ENCODE measurements at regions of chr7 and their contacts with region 1.

Region 1: DNA sequence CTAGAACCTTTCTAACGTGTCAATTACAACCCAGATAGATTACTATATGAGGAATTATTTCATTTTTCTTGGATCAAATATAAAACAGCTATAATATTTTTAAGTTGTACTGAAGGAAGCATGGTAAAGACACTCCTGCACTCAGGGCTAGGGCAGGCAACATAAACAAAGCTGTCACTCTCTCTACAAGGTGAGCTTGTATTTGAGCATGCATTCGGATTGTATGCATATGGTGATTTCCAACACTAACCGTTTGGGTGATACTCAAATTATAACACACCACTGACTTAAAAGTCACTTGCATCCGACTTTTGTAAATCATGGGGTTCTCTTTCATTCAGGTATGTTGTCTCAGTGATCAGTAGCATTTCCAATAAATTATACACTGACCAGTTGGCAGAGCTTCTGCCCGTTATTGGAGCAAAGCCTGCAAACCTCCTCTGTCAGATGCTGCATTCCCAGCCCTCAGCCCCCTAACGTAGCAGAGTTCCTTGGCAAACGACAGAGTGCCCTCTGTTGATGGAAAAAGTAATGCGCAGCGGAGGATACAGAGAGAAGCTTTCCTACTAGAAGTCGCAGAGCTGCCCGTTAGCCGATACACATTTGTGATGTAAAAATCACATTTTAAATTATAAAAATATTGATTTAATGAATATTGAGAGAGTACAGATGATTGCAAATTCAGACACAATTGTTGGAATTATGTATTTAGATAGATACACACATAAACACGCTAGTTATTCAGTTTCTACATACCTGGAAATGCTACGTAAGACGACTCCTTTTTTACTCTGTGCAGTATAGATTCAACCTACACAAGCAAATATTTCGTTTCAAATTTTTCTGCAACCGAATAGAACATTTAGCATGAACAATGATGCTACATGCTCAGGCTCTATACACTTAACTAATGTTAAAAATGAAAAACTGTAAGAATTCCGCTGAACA is 173.9 kb upstream of the SP4 start:
- DNase-seq: no peak
- H3K4me3 ChIP-seq: no peak overlapping the region
- H3K27ac ChIP-seq: no peak overlapping the region
- H3K4me1 ChIP-seq: peaks cover 0 to 8% (median 3%) of the 10 kb centered on the region in 6 donors
- H3K27me3 ChIP-seq: peaks cover 0 to 85% (median 44%) of the 10 kb centered on the region in 7 donors
- CTCF ChIP-seq: peak in 8 of 11 experiments; percentile 10 to 62 (median 48)
- POLR2A ChIP-seq: no peak

Region 2: DNA sequence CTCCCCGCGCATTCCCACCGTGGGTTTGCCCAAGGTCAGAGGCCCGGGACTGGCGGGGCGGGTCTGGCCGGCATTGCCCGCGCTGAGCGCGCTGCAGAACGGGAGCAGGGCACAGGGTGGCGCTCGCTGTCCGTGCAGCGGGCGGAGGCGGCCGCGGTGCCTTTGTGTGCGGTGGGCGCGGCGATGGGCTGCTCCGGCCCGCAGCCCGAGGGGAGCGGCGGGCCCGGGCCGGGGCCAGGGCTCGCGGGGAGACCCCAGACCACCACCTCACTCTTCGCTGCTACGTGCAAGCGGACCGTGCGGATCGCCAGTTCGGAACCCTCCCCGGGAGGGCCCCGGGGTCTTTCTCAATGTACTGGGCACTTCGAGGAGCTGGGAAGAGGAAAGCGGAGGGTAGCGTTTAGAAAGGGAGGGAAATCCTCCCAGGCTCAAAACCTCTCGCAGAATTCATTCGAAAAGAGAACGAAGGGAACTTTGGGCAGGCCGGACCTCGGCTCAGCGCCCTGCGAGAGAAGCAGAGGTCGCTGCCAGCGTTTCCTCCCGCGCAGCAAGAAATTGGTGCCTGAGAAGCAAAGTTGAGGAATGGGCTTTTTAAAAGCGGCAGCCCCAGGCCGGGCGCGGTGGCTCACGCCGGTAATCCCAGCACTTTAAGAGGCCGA is 475.8 kb before region 1 on chr7:
- intact Hi-C with region 1: loop called (anchors 5 kb)
- DNase-seq: peak; percentile 76
- H3K4me3 ChIP-seq: peak overlapping the region in 7 of 8 donors; percentile 8 to 56 (median 23)
- H3K27ac ChIP-seq: no peak overlapping the region
- H3K4me1 ChIP-seq: peaks cover 3 to 18% (median 11%) of the 10 kb centered on the region in 6 donors
- H3K27me3 ChIP-seq: peaks cover 5 to 100% (median 98%) of the 10 kb centered on the region in 7 donors
- CTCF ChIP-seq: peak in 8 of 11 experiments; percentile 34 to 74 (median 51)
- POLR2A ChIP-seq: no peak

Region 3: GRCh38 chr7:21365866-21366624 is 112.0 kb after region 1 on chr7:
- intact Hi-C with region 1: no loop called
- DNase-seq: no peak
- H3K4me3 ChIP-seq: no peak overlapping the region
- H3K27ac ChIP-seq: no peak overlapping the region
- H3K4me1 ChIP-seq: no peaks in the 10 kb centered on the region
- H3K27me3 ChIP-seq: no peaks in the 10 kb centered on the region
- CTCF ChIP-seq: no peak
- POLR2A ChIP-seq: no peak

Region 4: GRCh38 chr7:21507626-21508343 is 253.8 kb after region 1 on chr7:
- intact Hi-C with region 1: loop called (anchors 5 kb)
- DNase-seq: no peak
- H3K4me3 ChIP-seq: no peak overlapping the region
- H3K27ac ChIP-seq: no peak overlapping the region
- H3K4me1 ChIP-seq: no peaks in the 10 kb centered on the region
- H3K27me3 ChIP-seq: no peaks in the 10 kb centered on the region
- CTCF ChIP-seq: peak; percentile 34 to 81 (median 74)
- POLR2A ChIP-seq: no peak

Region 5: DNA sequence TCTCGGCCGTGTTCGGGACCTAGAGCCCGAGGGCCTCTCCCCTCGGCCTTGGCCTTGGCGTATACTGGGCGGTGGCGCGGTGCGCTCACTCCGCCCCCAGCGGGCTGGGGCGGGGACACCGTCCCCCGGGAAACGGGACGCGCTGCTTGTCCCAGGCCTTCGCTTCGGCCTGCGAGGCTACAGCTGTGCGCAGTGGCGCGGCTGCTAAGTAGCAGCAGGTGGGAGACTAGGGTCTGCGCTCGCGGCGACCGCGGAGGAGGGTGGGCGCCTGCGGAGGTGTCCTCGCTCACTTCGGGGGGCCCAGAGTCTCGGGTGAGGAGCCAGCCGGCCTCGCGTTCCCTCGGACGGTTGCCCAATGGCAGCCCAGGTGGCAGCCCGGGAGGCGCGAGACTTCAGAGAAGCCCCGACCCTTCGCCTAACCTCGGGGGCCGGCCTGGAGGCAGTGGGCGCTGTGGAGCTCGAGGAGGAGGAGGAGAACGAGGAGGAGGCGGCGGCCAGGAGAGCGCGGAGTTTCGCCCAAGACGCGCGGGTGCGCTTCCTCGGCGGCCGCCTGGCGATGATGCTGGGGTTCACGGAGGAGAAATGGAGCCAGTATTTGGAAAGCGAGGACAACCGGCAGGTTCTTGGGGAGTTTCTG is 289.0 kb after region 1 on chr7 and contains the start of gene DNAH11:
- intact Hi-C with region 1: no loop called
- DNase-seq: peak; percentile 77
- H3K4me3 ChIP-seq: peak within 1 kb of the TSS in 7 of 8 donors; percentile 22 to 66 (median 37)
- H3K27ac ChIP-seq: no peak within 1 kb of the TSS
- H3K4me1 ChIP-seq: peaks cover 12 to 17% (median 15%) of the 10 kb centered on the region in 6 donors
- H3K27me3 ChIP-seq: peaks cover 0 to 76% (median 44%) of the 10 kb centered on the region in 7 donors
- CTCF ChIP-seq: no peak
- POLR2A ChIP-seq: no peak
- total RNA-seq, gene DNAH11: 0.30 to 2.1 (median 1.1) TPM

Region 6: DNA sequence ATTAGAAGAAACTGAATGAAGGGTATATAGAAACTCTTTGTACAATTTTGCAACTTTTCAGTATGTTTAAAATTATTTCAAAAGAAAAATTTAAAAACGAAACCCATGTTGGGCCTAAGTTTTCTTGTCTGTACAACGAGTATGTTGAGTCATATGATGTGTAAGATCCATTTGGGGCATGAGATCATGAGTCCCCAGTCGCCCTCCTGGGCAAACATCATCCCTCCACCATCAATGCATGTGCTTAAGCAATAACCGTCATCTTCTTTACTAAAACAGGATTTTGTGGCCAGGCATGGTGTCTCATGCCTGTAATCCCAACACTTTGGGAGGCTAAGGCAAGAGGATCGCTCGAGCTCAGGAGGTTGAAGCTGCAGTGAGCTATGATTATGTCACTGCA is 745.9 kb after region 1 on chr7:
- intact Hi-C with region 1: loop called (anchors 10 kb)
- DNase-seq: no peak
- H3K4me3 ChIP-seq: no peak overlapping the region
- H3K27ac ChIP-seq: no peak overlapping the region
- H3K4me1 ChIP-seq: peaks cover 0 to 7% (median 4%) of the 10 kb centered on the region in 6 donors
- H3K27me3 ChIP-seq: no peaks in the 10 kb centered on the region
- CTCF ChIP-seq: no peak
- POLR2A ChIP-seq: no peak

Measured in spleen (tissue), 13 donors.